IMR-90 (cell line): ENCODE measurements at regions of chr9 and their contacts with region 1.

Region 1: GRCh38 chr9:130834371-130835311 is at the start of gene ABL1:
- DNase-seq: peak; percentile 85
- ATAC-seq: peak; percentile 76
- H3K4me3 ChIP-seq: peak within 1 kb of the TSS; percentile 75
- H3K27ac ChIP-seq: peak within 1 kb of the TSS; percentile 98
- H3K4me1 ChIP-seq: peaks cover 19% of the 10 kb centered on the region
- H3K27me3 ChIP-seq: no peaks in the 10 kb centered on the region
- CTCF ChIP-seq: no peak
- POLR2A ChIP-seq: peak; percentile 80
- RAD21 ChIP-seq: 0 out of 2 replicates have a peak, but pooled peaks have one; percentile 6
- total RNA-seq, gene ABL1: 31.9 and 33.7 TPM in 2 replicates

Region 2: GRCh38 chr9:130444565-130445221 is 389.9 kb before region 1 on chr9 and contains the start of gene ASS1:
- CTCF ChIA-PET with region 1: no interaction called
- POLR2A ChIA-PET with region 1: no interaction called
- dilution Hi-C with region 1: no loop called
- in situ Hi-C with region 1: no loop called
- intact Hi-C with region 1: no loop called
- DNase-seq: no peak
- ATAC-seq: peak; percentile 24
- H3K4me3 ChIP-seq: peak within 1 kb of the TSS; percentile 43
- H3K27ac ChIP-seq: peak within 1 kb of the TSS; percentile 81; the same call in 1 of the 2 replicates
- H3K4me1 ChIP-seq: peaks cover 32% of the 10 kb centered on the region
- H3K27me3 ChIP-seq: peaks cover 6% of the 10 kb centered on the region
- CTCF ChIP-seq: no peak
- POLR2A ChIP-seq: no peak
- RAD21 ChIP-seq: no peak
- total RNA-seq, gene ASS1: 31.1 and 39.6 TPM in 2 replicates

Region 3: DNA sequence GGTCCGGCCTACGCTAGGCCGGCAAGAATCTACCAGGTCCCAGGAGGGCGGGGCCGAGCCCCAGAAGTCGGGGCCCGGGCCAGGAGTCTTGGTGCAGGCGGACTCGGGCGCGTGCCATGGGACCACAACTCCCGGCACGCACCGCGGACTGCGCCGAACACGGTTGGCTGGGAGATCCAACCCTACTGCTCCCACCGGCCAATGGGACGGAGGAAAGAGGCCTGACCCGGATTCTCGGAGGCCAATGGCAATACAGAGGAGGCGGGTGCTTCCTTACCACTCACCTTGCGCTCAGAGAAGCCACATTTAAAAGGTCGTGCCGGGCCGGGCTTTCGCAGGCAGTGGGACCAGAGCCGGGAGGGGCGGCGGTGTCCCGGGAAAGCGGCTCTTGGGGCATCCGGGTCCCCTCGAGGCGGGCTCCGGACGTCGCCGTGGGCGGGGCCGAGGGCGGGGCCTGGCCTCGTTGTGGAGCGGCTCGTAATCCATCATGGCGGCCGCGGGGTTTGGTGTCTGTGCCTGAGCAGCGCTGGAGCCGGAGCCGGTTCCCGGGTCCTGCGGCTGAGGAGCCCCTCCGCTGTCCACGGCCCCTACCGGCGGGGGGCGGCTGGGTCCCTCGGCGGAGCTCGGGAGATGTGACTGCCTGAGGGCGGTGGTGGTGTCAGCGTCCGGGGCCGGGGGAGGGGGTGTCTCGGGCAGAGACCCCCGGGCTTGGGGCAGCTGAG is 121.9 kb before region 1 on chr9:
- CTCF ChIA-PET with region 1: interaction called, 7 read pairs
- POLR2A ChIA-PET with region 1: no interaction called
- dilution Hi-C with region 1: no loop called
- in situ Hi-C with region 1: no loop called
- intact Hi-C with region 1: loop called (anchors 2 kb)
- DNase-seq: peak; percentile 98
- ATAC-seq: peak; percentile 97
- H3K4me3 ChIP-seq: peak overlapping the region; percentile 60
- H3K27ac ChIP-seq: peak overlapping the region; percentile 88
- H3K4me1 ChIP-seq: peaks cover 2% of the 10 kb centered on the region; the same call in 1 of the 2 replicates
- H3K27me3 ChIP-seq: no peaks in the 10 kb centered on the region
- CTCF ChIP-seq: no peak
- POLR2A ChIP-seq: peak; percentile 98
- RAD21 ChIP-seq: peak; percentile 3; the same call in 1 of the 2 replicates

Region 4: GRCh38 chr9:130770679-130771442 is 63.8 kb before region 1 on chr9:
- CTCF ChIA-PET with region 1: interaction called, 3 read pairs
- POLR2A ChIA-PET with region 1: no interaction called
- dilution Hi-C with region 1: no loop called
- in situ Hi-C with region 1: loop called (anchors 10 kb)
- intact Hi-C with region 1: loop called (anchors 1 kb)
- DNase-seq: peak; percentile 82
- ATAC-seq: peak; percentile 91
- H3K4me3 ChIP-seq: no peak overlapping the region
- H3K27ac ChIP-seq: no peak overlapping the region
- H3K4me1 ChIP-seq: peaks cover 20% of the 10 kb centered on the region
- H3K27me3 ChIP-seq: no peaks in the 10 kb centered on the region
- CTCF ChIP-seq: peak; percentile 74
- POLR2A ChIP-seq: no peak
- RAD21 ChIP-seq: peak; percentile 85

Region 5: GRCh38 chr9:130780865-130781504 is 53.7 kb before region 1 on chr9:
- CTCF ChIA-PET with region 1: no interaction called
- POLR2A ChIA-PET with region 1: no interaction called
- dilution Hi-C with region 1: no loop called
- in situ Hi-C with region 1: loop called (anchors 10 kb)
- intact Hi-C with region 1: loop called (anchors 2 kb)
- DNase-seq: peak; percentile 98
- ATAC-seq: peak; percentile 87
- H3K4me3 ChIP-seq: peak overlapping the region; percentile 39; the same call in 1 of the 2 replicates
- H3K27ac ChIP-seq: peak overlapping the region; percentile 97
- H3K4me1 ChIP-seq: peaks cover 22% of the 10 kb centered on the region
- H3K27me3 ChIP-seq: no peaks in the 10 kb centered on the region
- CTCF ChIP-seq: no peak
- POLR2A ChIP-seq: peak; percentile 89
- RAD21 ChIP-seq: 0 out of 2 replicates have a peak, but pooled peaks have one; percentile 18